Left colon (tissue), 2 donors: ENCODE measurements at regions of chrX and their contacts with region 1.

Region 1: GRCh38 chrX:16695079-16695676 is 17.3 kb downstream of the CTPS2 start:
- DNase-seq: peak; percentile 39 to 78
- ATAC-seq: peak; percentile 68

Region 2: GRCh38 chrX:16436348-16437188 is 258.6 kb before region 1 on chrX:
- intact Hi-C with region 1: loop called in 1 of 2 experiments (anchors 10 kb)
- DNase-seq: peak; percentile 58 to 80
- ATAC-seq: peak; percentile 89

Region 3: GRCh38 chrX:16855363-16856075 is 160.3 kb after region 1 on chrX:
- intact Hi-C with region 1: no loop called
- DNase-seq: no peak
- ATAC-seq: no peak